Right ventricle myocardium inferior (tissue), 1 donor: ENCODE measurements at regions of chr1 and their contacts with region 1.

Region 1: DNA sequence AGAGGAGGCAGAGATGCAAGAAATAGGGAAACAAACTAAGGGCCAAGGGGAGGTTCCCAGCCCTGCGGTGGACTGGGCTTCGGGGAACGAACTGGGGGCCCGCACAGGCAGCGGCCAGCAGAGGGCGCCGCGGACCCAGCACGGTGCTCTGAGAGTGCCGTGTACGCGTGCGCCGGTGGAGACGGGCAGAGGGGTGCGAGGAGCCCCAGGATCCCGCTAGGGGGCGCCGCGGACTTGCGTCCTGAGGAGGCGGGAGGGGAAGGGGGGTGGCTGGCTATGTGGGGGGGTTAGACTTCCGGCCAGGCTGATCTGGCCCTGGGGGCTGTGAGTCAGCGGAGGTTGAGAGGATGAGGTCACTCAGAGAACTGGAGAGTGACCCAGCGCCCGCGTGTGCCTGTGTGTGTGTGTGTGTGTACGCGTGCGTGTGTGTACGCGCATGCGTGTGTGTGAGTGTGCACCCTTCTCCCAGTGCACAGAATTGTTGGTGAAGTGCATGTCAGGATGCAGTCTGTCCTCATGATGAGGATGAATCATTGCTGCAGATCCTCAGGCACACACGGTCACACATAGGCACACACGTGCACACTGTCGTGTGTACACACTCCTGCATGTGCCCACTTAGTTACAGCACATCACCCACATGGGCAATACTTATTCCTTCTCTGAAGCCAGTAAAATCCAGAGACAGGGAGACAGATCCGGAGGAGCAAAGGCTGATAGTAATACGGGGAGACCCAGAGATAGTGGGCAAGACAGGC is 17.0 kb downstream of the NES start:
- DNase-seq: peak; percentile 97
- ATAC-seq: peak; percentile 90

Region 2: GRCh38 chr1:156129706-156130581 is 530.2 kb before region 1 on chr1:
- intact Hi-C with region 1: loop called (anchors 10 kb)
- DNase-seq: peak; percentile 87
- ATAC-seq: peak; percentile 54

Region 3: GRCh38 chr1:156383023-156383422 is 277.1 kb before region 1 on chr1:
- intact Hi-C with region 1: loop called (anchors 2 kb)
- DNase-seq: peak; percentile 61
- ATAC-seq: peak; percentile 83

Region 4: GRCh38 chr1:156500797-156501499 is 159.2 kb before region 1 on chr1:
- intact Hi-C with region 1: loop called (anchors 2 kb)
- DNase-seq: peak; percentile 96
- ATAC-seq: peak; percentile 85

Region 5: DNA sequence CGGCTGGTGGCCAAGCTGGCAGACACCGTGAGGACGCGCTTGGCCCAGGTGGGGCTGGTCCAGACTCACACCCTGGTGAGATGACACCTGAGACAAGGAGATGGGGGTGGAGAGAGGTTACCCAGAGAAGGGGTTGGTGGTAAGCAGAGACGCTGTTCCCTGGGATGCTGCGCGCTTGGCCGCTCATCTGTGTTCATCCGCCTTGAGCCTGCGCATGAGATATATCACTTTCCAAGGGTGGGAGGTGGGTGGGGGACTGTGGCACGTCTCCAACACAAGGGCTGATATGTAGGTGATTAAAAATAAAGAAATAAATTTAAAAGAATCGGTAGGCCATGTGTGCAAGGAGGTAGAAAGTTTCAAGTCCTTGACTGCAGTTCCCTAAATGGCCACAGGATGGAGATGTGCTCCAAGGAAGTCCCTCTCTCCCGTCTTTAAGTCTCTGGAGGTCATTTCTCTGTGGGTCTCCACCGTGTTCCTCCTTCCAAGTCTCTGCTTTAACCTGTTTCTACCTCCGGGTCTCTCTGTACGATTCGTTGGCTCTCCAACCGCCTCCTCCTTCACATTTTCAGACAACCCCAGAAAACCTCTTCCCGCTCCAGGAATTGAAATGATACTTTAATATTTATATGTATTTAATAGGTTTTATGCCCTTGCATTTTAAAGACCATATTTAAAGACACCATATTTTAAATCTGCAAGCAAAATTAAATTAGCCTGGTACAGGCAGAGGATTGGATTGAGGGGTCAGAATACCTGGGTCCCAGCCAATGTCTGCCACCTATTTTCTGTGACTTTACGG is 76.2 kb before region 1 on chr1:
- intact Hi-C with region 1: loop called (anchors 2 kb)
- DNase-seq: no peak
- ATAC-seq: no peak

Region 6: DNA sequence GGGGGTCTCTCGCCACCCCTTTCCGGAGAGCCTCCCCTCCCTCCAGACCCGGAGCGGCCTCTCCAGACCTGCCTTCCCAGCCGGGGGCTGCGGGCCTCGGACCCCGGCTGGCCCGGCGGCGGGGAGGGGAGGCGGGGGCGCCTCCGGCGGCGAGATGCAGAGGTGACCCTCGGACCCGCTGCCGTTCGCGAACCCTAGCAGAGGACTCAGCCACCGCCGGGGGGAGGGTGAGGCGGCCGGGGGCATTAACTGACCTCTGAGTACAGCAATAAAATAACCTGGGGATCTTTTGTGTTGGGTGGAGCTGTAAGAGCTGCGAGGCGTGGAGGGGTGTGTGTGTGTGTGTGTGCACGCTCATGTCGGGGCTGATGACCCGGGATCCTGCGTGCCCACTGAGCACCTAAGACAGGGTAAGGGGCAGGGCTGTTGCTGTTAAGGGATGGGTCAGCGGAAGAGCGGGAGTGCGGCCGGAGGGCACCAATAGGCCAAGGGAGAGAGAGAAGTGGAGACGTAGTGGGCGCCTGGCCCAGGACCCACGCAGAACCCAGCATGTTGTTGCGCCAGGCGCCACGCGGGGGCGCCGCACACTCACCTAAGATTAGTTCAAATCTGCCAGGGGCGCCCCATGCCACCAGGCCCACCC is 34.6 kb before region 1 on chr1:
- intact Hi-C with region 1: loop called (anchors 1 kb)
- DNase-seq: peak; percentile 84
- ATAC-seq: peak; percentile 62

Region 7: GRCh38 chr1:156677616-156678596 is 17.7 kb after region 1 on chr1:
- intact Hi-C with region 1: loop called (anchors 1 kb)
- DNase-seq: peak; percentile 87
- ATAC-seq: peak; percentile 74

Region 8: DNA sequence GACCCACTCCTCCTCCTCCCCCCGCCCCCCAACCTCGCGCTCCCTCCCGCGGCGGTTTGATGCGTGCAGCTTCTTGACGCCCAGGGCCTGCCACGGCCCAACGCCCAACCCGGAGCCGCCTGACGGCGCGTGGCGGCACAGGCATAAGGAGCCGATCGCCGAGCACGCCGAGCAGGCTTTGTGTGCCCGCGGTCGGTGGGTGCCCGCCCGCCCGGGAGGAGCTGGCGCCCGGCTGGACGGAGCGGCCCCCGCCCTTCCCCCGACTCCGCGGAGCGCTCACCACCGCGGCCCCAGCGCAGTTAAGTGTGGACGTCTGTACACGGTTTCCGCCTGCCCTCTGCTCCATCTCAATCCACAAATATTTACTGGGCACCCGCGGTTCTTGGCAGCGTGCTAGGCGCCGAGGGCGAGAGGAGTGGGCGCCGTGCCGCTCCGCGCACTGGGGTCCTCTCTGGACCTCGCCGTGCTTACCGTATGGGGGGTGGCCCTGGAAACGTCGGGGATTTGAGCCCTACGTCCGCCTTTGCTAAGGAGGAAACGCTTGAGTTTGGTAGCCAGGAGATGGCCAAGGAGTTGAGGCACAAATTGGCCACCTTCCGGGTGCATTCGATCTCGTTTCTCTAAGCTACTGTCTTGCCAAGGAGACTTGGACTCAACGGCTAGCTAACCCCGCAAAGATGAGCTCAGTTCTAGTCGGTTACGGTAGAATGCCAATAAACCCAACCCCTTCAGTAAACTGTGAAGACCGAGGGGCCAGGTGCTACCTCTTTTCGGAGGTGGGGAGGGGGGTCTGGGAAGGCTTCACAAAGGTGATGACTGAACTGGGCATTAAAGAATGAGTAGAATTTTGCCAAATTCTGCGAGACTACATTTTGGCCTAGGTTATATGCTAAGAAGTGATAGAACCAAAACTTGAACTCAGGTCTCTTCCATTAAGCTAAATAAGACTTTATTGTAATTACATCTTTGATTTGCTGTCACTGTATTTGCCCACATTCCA is 91.9 kb after region 1 on chr1:
- intact Hi-C with region 1: no loop called
- DNase-seq: peak; percentile 99
- ATAC-seq: peak; percentile 84